ENCODE measurements at regions of chr13 and their contacts with region 1.

Region 1: DNA sequence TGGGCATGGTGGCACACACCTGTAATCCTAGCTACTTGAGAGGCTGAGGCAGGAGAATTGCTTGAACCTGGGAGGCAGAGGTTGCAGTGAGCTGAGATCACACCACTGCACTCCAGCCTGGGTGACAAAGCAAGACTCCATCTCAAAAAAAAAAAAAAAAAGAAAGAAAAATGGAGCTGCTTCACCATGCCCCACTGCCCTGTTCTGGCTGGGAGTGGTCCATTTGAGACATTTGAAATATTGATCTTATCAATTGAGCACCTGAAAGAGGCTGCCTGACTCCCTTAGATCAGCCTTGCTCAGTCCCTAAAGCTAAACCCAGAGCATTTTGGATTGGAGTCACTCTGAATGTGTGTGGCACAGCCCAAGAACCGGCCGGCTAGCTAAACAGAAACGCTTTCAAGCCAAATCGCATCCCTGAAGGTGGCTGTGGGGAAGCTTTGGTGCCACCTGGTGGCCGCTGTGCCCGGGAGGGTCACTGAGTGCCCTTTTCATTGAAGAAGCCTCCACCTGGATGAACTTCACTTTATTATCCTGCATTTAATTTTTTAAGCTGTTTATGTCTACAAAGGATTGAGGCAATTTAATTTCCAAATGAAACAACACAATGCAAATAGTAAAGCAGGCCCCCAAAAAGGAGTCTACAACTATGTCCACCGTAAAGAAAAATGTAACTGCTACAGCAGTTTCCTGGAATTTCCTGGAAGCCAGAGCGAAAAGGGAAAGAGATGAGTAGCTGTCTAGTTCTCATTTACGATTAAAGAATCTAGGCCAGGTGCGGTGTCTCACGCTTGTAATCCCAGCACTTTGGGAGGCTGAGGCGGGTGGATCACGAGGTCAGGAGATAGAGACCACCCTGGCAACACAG is 53.1 kb upstream of the SERPINE3 start:
- DNase-seq: peak; percentile 74 to 83
- ATAC-seq: peak; percentile 80 to 88 (median 84)
- H3K4me3 ChIP-seq: no peak overlapping the region
- H3K27ac ChIP-seq: no peak overlapping the region
- H3K4me1 ChIP-seq: peaks cover 0 to 22% (median 3%) of the 10 kb centered on the region in 9 donors
- H3K27me3 ChIP-seq: no peaks in the 10 kb centered on the region
- CTCF ChIP-seq: peak; percentile 83 to 96 (median 95)

Region 2: DNA sequence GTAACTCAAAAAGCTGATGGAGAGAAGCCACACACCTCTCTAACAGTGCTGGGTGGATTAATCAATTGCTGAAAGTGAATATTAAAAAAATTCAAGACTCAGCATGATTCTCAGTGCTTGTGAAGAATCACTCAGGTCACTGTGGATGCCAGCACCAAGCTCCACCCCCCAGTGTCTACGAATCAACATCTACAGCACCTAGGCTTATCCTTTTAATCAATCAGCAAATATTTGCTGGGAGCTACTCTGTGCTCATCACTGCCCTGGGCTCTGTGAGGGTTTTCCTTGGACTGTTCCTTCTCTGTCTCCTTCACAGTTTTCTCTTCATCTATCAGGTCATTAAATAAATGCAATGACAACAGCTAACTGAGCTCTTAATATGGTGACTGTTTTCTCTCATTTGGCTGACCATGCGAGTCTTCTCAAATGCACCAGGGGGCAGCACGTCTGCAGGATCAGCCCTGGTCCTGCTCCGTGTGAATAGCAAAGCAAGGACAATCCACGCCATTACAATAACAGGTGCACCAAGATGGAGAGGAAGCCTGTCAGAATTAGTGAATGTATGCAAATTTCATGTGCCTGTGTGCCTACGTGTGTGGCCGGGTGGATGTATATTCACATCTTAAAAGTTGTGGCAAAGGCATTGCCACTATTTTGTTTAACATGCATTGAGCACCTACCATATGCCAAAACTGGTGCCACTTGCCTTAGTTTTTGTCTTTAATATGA is 160.7 kb before region 1 on chr13:
- intact Hi-C with region 1: loop called in 6 of 10 experiments (anchors 1 to 5 kb)
- DNase-seq: peak; percentile 28 to 53
- ATAC-seq: peak in 6 of 8 donors; percentile 70 to 82 (median 74)
- H3K4me3 ChIP-seq: no peak overlapping the region
- H3K27ac ChIP-seq: no peak overlapping the region
- H3K4me1 ChIP-seq: no peaks in the 10 kb centered on the region
- H3K27me3 ChIP-seq: peaks cover 0 to 15% (median 0%) of the 10 kb centered on the region in 7 donors
- CTCF ChIP-seq: peak; percentile 39 to 84 (median 76)

Region 3: GRCh38 chr13:51148952-51149573 is 137.3 kb before region 1 on chr13:
- intact Hi-C with region 1: loop called (anchors 1 to 5 kb)
- DNase-seq: peak in 1 of 2 donors; percentile 21
- ATAC-seq: peak; percentile 38 to 78 (median 70)
- H3K4me3 ChIP-seq: no peak overlapping the region
- H3K27ac ChIP-seq: peak overlapping the region in 2 of 10 donors; percentile 6 to 62
- H3K4me1 ChIP-seq: peaks cover 0 to 9% (median 0%) of the 10 kb centered on the region in 9 donors
- H3K27me3 ChIP-seq: peaks cover 0 to 6% (median 0%) of the 10 kb centered on the region in 7 donors
- CTCF ChIP-seq: peak; percentile 35 to 80 (median 64)

Region 4: DNA sequence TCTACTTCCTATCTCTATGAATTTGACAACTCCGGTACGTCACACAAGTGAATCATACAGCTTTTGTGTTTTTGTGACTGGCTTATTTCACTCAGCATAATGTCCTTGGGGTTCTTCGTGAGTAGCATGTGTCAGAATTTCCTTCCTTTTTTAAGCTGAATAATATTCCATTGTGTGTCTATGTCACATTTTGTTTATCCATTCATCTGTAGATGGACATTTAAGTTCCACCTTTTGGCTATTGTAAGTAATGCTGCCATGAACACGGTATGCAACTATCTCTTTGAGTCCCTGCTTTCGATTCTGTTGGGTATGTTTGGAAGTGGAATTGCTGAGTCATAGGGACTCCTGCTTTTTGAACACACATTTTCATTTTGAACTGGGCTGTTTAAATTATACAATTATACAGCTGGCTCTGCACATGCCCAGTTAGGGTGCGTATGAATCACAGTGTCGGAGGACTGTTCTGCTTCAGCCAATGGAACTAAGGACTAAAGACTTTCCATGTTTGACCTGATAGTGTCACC is 132.3 kb before region 1 on chr13:
- intact Hi-C with region 1: loop called (anchors 1 to 5 kb)
- DNase-seq: no peak
- ATAC-seq: peak in 2 of 8 donors; percentile 30 to 65
- H3K4me3 ChIP-seq: no peak overlapping the region
- H3K27ac ChIP-seq: no peak overlapping the region
- H3K4me1 ChIP-seq: peaks cover 0 to 14% (median 0%) of the 10 kb centered on the region in 9 donors
- H3K27me3 ChIP-seq: peaks cover 0 to 4% (median 0%) of the 10 kb centered on the region in 7 donors
- CTCF ChIP-seq: no peak

Region 5: DNA sequence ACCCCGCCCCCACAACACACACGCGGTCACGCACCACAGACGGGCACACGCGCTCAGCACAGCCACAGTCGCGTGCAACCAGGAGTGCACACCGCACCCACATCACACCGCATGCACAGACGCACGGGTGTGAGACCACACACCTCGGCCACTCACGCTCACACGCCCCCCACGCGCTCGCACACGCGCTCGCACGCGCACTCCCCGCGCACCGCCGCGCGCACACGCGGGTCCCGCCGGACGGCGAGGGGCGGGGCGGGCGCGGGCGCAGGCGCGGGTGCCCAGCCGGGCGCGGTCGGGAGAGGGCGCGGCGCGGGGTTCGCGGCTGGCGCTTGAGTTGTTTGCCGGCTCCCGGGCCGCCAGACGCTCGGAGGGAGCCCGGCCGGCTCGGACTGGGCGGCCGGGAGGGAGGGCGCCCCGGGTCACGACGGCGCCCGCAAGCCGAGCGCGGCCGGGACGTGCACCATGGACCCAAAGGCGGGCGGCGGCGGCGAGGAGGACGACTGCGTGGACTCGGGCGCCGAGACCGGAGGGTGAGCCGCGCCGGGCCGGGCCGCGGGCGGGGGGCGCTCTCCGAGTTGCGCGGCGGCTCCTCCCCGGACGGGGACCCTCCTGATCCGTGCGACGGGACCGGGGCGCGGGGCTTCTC is 64.2 kb before region 1 on chr13 and contains the start of gene FAM124A:
- intact Hi-C with region 1: loop called (anchors 1 to 5 kb)
- DNase-seq: peak; percentile 36 to 66
- ATAC-seq: peak; percentile 53 to 94 (median 80)
- H3K4me3 ChIP-seq: peak within 1 kb of the TSS; percentile 68 to 98 (median 83)
- H3K27ac ChIP-seq: peak within 1 kb of the TSS; percentile 58 to 89 (median 78)
- H3K4me1 ChIP-seq: peaks cover 0 to 34% (median 18%) of the 10 kb centered on the region in 9 donors
- H3K27me3 ChIP-seq: peaks cover 0 to 33% (median 0%) of the 10 kb centered on the region in 7 donors
- CTCF ChIP-seq: peak in 6 of 9 donors; percentile 3 to 55 (median 32)
- total RNA-seq, gene FAM124A: 5.1 to 14.0 (median 8.4) TPM

Region 6: DNA sequence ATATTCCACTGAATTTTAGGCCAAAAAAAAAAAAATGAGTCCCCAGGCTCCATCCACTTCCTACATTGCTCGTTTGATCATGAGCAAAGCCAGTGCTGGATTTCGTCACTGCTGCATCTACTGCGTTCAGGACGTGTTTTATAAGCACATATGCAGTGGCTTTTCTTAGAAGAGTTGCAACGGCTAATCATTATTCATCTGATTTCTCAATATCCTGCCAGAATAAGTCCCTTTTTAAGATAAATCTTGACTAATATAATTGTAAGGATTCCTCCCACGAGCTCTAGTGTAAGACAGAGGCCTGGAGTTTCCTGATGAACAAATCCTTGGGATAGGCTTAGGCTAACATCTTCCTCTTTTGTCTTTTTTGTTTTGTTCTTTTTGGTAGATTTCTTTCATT is 44.6 kb before region 1 on chr13:
- intact Hi-C with region 1: loop called in 1 of 10 experiments (anchors 5 kb)
- DNase-seq: no peak
- ATAC-seq: no peak
- H3K4me3 ChIP-seq: no peak overlapping the region
- H3K27ac ChIP-seq: peak overlapping the region in 2 of 10 donors; percentile 5 to 31
- H3K4me1 ChIP-seq: peaks cover 0 to 43% (median 17%) of the 10 kb centered on the region in 9 donors
- H3K27me3 ChIP-seq: no peaks in the 10 kb centered on the region
- CTCF ChIP-seq: no peak